ENCODE measurements at regions of chr5 and their contacts with region 1.

Region 1: DNA sequence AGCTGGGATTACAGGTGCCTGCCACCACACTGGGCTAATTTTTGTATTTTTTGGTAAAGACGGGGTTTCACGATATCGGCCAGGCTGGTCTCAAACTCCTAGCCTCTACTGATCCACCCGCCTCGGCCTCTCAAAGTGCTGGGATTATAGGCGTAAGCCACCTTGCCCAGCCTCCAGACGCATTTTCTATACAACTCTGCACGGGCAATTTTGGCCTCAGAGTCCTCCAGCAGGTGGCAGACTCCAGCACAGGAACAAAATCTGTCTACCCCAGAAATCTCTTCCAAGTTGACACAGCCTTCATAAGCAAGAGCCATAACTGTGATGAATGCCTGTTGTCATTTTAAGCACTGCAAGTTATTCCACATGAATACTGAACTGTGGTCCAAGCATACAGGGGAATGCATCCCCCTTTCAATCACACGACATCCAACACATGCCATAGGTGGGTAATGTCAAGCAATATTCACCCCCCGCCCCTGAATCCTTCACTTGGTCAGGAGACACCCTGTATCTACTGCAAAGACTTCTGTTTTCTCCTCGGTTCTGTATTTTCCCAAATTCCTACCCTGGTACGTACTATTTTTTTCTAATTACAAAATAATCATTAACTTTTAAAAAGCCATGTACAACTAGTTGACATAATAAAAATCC is 50.8 kb downstream of the ALDH7A1 start:
- DNase-seq: peak; percentile 58
- H3K4me3 Mint-ChIP-seq: no peak overlapping the region
- H3K27ac Mint-ChIP-seq: no peak overlapping the region
- H3K4me1 Mint-ChIP-seq: no peaks in the 10 kb centered on the region
- H3K27me3 Mint-ChIP-seq: no peaks in the 10 kb centered on the region
- CTCF ChIP-seq: peak; percentile 71

Region 2: DNA sequence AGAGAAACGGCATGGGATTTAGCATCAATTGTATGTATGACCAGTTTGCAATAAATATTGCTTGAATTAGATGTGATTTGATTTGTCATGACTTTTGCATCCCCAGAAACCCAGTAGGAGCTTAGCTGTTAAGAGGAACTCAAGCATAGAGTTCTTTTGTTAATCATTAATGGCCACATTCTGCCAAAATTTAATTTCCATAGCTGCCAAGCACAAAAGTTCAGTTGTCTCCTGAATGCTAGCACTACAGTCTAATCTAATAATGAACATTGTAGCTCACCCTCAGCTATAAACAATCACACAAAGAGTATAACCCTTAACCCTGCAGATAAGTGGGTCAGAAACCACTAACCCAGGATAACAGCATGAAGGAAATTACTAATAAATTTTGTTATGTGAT is 290.8 kb before region 1 on chr5:
- CTCF ChIA-PET with region 1: interaction called, 10 read pairs
- intact Hi-C with region 1: no loop called
- DNase-seq: no peak
- H3K4me3 Mint-ChIP-seq: no peak overlapping the region
- H3K27ac Mint-ChIP-seq: no peak overlapping the region
- H3K4me1 Mint-ChIP-seq: no peaks in the 10 kb centered on the region
- H3K27me3 Mint-ChIP-seq: no peaks in the 10 kb centered on the region
- CTCF ChIP-seq: no peak

Region 3: DNA sequence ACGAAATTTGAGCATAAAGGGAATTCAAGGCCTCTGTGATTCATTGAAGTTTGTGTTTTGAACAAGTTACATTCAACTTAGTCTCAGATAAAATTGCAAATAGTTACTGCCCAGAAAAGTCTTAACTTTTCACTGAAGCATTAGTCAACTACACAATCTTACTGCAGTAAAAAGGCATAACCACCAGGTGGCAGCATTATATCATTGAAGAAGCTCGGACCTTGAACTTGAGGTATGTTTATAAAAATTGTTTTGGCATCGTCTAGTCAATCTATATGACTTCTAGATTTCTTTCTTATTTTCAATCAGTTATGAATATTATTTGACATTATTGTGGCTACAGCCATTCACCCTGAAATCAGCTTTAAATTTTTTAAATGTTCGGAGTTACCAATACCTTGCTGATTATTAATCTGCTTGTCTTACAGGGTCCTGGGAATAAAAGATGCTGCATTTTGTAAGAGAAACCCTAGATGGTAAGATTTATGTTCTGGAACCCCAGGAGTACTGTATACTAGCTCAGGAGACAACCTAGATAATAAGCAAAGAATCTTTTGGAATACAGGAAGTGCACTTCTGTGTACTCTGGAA is 204.9 kb before region 1 on chr5:
- CTCF ChIA-PET with region 1: interaction called, 11 read pairs
- intact Hi-C with region 1: loop called (anchors 1 kb)
- DNase-seq: peak; percentile 72
- H3K4me3 Mint-ChIP-seq: no peak overlapping the region
- H3K27ac Mint-ChIP-seq: no peak overlapping the region
- H3K4me1 Mint-ChIP-seq: peaks cover 7% of the 10 kb centered on the region
- H3K27me3 Mint-ChIP-seq: no peaks in the 10 kb centered on the region
- CTCF ChIP-seq: peak; percentile 75

Region 4: DNA sequence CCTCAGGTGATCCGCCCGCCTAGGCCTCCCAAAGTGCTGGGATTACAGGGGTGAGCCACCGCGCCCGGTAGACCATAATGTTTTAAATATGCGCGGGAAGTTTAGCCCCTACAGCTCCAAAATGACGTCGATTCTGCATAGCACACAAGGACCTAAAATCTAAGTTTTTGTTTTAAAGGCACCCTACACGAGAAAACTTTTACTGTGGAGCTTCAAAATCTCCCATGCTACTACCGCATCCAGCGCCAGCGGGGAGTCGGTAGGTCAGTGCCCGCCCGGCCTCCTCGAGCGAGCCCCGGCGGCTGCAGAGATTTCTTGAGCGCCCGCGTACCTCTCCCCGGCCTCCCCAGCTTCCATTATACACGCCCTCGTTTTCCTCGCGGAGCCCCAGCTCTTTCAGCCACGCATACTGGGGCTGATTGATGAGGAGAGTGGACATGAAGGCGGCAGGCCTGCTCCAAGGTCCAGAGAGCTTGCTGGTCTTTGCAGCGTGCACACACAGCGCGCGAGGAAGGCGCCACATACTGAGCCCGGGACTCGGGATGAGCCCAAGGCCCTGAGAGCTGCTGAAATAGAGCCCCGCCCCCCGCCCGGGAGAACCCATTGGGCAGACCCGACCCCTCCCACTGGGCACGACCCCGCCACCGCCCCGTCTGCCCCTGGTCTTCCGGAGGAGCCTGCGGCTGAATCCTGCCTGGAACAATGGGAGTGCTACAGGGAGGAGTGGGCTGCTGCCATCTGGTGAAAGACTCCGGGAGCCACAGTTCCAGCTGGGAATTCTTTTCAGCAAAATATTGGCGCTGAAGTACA is 50.7 kb after region 1 on chr5 and contains the start of gene ALDH7A1:
- CTCF ChIA-PET with region 1: no interaction called
- intact Hi-C with region 1: loop called (anchors 2 kb)
- DNase-seq: peak; percentile 93
- H3K4me3 Mint-ChIP-seq: peak within 1 kb of the TSS; percentile 97
- H3K27ac Mint-ChIP-seq: peak within 1 kb of the TSS; percentile 97
- H3K4me1 Mint-ChIP-seq: peaks cover 14% of the 10 kb centered on the region
- H3K27me3 Mint-ChIP-seq: no peaks in the 10 kb centered on the region
- CTCF ChIP-seq: peak; percentile 45
- total RNA-seq, gene ALDH7A1: 78.0 and 108 TPM in 2 replicates

Region 5: DNA sequence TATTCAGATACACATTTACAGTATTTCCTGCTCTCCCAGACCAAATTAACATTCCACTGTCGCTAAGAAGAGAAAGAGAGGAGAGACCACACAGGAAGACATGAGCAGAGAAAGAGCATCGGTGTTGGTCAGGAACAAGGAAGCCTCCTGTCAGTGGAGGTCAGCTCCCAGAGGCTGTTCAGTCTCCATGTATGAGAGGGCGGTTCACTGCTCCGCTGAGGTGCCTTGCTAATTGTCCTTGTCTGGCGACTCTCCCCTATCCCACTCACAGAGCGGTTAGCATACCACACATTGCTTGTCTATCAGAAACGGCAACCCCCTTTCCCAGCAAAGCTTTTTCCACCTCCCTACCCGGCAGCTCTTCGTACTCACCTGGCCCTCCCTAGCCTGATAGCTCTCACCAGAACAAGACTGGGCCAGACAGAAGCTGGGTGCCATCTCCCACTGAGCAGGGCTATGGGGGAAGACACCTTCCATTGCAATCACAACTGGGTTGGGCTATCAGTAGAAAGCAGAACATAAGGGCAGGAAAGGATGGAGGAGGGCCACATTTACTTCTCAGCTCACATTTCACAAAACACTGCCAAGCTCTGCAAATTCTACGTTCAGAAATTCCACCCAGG is 174.1 kb after region 1 on chr5:
- CTCF ChIA-PET with region 1: no interaction called
- intact Hi-C with region 1: no loop called
- DNase-seq: no peak
- H3K4me3 Mint-ChIP-seq: no peak overlapping the region
- H3K27ac Mint-ChIP-seq: no peak overlapping the region
- H3K4me1 Mint-ChIP-seq: no peaks in the 10 kb centered on the region
- H3K27me3 Mint-ChIP-seq: no peaks in the 10 kb centered on the region
- CTCF ChIP-seq: no peak